ENCODE measurements at regions of chr6 and their contacts with region 1.

Region 1: GRCh38 chr6:159989492-159990480 is 20.9 kb downstream of the IGF2R start:
- DNase-seq: no peak
- ATAC-seq: peak; percentile 90
- H3K4me3 Mint-ChIP-seq: no peak overlapping the region
- H3K27ac Mint-ChIP-seq: peak overlapping the region; percentile 70
- H3K4me1 Mint-ChIP-seq: peaks cover 65% of the 10 kb centered on the region
- H3K27me3 Mint-ChIP-seq: no peaks in the 10 kb centered on the region

Region 2: DNA sequence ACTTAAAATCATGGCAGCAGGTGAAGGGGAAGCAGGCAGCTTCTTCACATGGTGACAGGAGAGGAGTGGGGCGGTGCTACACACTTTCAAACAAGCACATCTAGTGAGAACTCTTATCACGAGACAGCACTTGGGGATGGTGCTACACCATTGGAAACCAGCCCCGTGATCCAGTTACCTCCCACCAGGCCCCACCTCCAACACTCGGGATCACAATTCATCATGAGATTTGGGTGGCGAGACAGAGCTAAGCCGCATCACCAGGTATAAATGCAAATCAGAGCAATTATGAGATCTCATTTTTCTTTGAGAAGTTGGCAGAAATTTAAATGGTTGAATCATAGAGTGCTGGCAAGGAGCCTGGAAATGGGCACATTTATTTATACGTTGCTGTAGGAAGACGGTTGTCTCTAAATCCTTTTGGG is 10.5 kb after region 1 on chr6:
- CTCF ChIA-PET with region 1: interaction called, 14 read pairs
- POLR2A ChIA-PET with region 1: no interaction called
- intact Hi-C with region 1: no loop called
- DNase-seq: no peak
- ATAC-seq: no peak
- H3K4me3 Mint-ChIP-seq: no peak overlapping the region
- H3K27ac Mint-ChIP-seq: no peak overlapping the region
- H3K4me1 Mint-ChIP-seq: peaks cover 64% of the 10 kb centered on the region
- H3K27me3 Mint-ChIP-seq: no peaks in the 10 kb centered on the region